ENCODE measurements at regions of chr6 and their contacts with region 1.

Region 1: GRCh38 chr6:106783631-106784566 is 154.5 kb downstream of the QRSL1 start:
- DNase-seq: no peak
- ATAC-seq: peak; percentile 0 to 20 (median 6)
- H3K4me3 ChIP-seq: peak overlapping the region in 2 of 4 donors; percentile 48 to 50
- H3K27ac ChIP-seq: peak overlapping the region; percentile 84 to 99 (median 94)
- H3K4me1 ChIP-seq: peaks cover 6 to 40% (median 7%) of the 10 kb centered on the region in 3 donors
- H3K27me3 ChIP-seq: no peaks in the 10 kb centered on the region
- CTCF ChIP-seq: no peak

Region 2: GRCh38 chr6:106688186-106688951 is 95.5 kb before region 1 on chr6:
- intact Hi-C with region 1: no loop called
- DNase-seq: no peak
- ATAC-seq: peak; percentile 24 to 50 (median 32)
- H3K4me3 ChIP-seq: no peak overlapping the region
- H3K27ac ChIP-seq: peak overlapping the region in 2 of 4 donors; percentile 50 to 74
- H3K4me1 ChIP-seq: peaks cover 15 to 31% (median 25%) of the 10 kb centered on the region in 3 donors
- H3K27me3 ChIP-seq: no peaks in the 10 kb centered on the region
- CTCF ChIP-seq: no peak

Region 3: DNA sequence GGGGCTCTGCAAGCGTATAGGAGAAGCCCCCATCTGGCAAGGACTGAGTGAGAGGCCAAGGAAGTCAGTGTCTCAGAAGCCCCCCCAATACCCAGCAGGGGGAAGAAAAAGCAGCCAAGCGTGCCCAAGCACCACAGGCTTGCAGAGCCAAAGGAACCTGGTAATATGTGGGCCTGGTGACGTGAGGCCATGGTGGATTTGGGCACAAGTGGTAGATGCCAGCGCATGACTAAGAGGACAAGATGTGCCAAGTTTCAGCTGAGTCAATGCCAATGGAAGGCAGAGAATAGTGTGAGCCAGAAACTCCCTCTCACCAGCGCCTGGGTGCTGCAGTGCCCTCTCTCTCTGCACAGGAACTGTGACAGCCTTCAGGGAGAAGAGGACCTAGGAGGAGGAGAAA is 44.5 kb before region 1 on chr6:
- intact Hi-C with region 1: loop called in 1 of 3 experiments (anchors 10 kb)
- DNase-seq: peak; percentile 72 to 95 (median 88)
- ATAC-seq: peak; percentile 86 to 95 (median 94)
- H3K4me3 ChIP-seq: no peak overlapping the region
- H3K27ac ChIP-seq: peak overlapping the region; percentile 44 to 95 (median 78)
- H3K4me1 ChIP-seq: peaks cover 27 to 48% (median 30%) of the 10 kb centered on the region in 3 donors
- H3K27me3 ChIP-seq: no peaks in the 10 kb centered on the region
- CTCF ChIP-seq: no peak

Region 4: DNA sequence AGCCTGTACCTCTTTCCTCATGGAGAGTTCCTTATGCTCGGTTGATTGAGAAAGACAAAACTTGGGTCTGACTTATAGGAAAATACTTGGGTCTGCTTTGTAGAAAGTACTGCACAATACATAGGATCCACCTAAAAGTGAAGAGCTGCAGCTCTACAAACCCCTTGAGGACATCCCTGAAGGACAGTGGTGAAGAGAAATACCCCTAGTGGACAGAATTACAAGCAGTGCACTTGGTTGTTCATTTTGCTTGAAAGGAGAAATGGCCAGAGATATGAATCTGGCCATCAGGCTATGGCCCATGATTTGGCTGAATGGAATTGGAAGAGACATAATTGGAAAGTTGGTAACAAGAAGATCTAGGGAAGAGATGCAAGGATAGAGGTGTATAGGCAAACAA is 182.3 kb after region 1 on chr6:
- intact Hi-C with region 1: loop called in 2 of 3 experiments (anchors 5 to 10 kb)
- DNase-seq: no peak
- ATAC-seq: no peak
- H3K4me3 ChIP-seq: no peak overlapping the region
- H3K27ac ChIP-seq: peak overlapping the region in 1 of 4 donors; percentile 55
- H3K4me1 ChIP-seq: no peaks in the 10 kb centered on the region
- H3K27me3 ChIP-seq: no peaks in the 10 kb centered on the region
- CTCF ChIP-seq: peak in 1 of 4 donors; percentile 11

Region 5: GRCh38 chr6:106979427-106979884 is 195.6 kb after region 1 on chr6:
- intact Hi-C with region 1: loop called in 1 of 3 experiments (anchors 10 kb)
- DNase-seq: peak; percentile 80 to 97 (median 91)
- ATAC-seq: peak; percentile 33 to 65 (median 61)
- H3K4me3 ChIP-seq: no peak overlapping the region
- H3K27ac ChIP-seq: no peak overlapping the region
- H3K4me1 ChIP-seq: peaks cover 6 to 15% (median 7%) of the 10 kb centered on the region in 3 donors
- H3K27me3 ChIP-seq: no peaks in the 10 kb centered on the region
- CTCF ChIP-seq: peak; percentile 90 to 98 (median 94)

Measured in pancreas (tissue), 10 donors.